RWPE1 (cell line): ENCODE measurements at regions of chr2 and their contacts with region 1.

Region 1: DNA sequence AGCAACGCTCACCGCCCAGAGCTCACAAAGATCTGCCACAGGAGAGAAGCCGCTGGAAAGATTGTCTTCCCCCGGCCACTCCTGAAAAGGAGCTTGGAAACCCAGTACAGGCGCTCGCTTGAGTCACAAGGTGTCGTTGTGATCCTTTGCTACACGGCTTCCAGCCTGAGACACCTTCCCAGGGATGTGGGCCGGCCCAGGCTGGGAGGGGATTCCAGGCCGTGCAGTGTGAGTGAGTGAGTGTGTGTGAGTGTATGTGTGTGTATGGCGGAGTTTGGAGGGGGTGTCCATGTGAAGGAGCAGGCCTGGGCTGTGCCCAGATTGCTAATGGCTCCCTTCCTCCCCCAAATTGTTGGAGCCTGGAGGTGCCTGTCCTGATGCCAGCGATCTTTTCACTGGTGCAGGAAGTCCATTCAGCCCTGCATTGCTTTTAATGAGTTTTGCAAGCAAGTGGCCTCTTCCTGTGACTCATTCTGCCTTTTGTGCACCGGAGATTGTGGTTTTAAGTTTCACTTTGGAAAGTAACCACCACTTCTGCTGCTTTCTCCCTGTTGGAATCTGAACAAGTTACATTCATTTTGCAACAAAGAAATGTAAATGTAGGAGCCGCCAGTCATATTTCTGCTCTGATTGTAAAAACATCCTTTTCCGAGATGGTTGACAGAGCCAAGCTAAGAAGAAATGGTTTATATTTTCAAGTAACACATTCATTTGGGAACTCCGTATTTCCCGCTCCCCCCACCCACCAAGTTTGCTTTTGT is 83.7 kb downstream of the LPIN1 start:
- DNase-seq: peak; percentile 97
- H3K27ac ChIP-seq: peak overlapping the region; percentile 98
- CTCF ChIP-seq: peak; percentile 69

Region 2: GRCh38 chr2:13006829-13007717 is 1176.9 kb after region 1 on chr2:
- CTCF ChIA-PET with region 1: interaction called, 25 read pairs
- POLR2A ChIA-PET with region 1: no interaction called
- DNase-seq: peak; percentile 63
- H3K27ac ChIP-seq: no peak overlapping the region
- CTCF ChIP-seq: peak; percentile 89